Psoas muscle (tissue), 8 donors: ENCODE measurements at regions of chr19 and their contacts with region 1.

Region 1: GRCh38 chr19:44051654-44052402 is at the start of gene ZNF223:
- DNase-seq: peak; percentile 94 to 96
- ATAC-seq: peak; percentile 100
- H3K4me3 ChIP-seq: peak within 1 kb of the TSS; percentile 78
- H3K27ac ChIP-seq: peak within 1 kb of the TSS; percentile 72
- H3K4me1 ChIP-seq: peaks cover 10% of the 10 kb centered on the region
- H3K27me3 ChIP-seq: peaks cover 0 to 12% (median 5%) of the 10 kb centered on the region in 3 donors
- CTCF ChIP-seq: no peak
- total RNA-seq, gene ZNF223: 0.19 to 1.5 (median 0.64) TPM

Region 2: GRCh38 chr19:43983912-43984686 is 67.7 kb before region 1 on chr19 and contains the start of gene ZNF155:
- intact Hi-C with region 1: loop called in 1 of 2 experiments (anchors 5 kb)
- DNase-seq: peak; percentile 89 to 93
- ATAC-seq: peak; percentile 100
- H3K4me3 ChIP-seq: peak within 1 kb of the TSS; percentile 81
- H3K27ac ChIP-seq: peak within 1 kb of the TSS; percentile 62
- H3K4me1 ChIP-seq: peaks cover 4% of the 10 kb centered on the region
- H3K27me3 ChIP-seq: no peaks in the 10 kb centered on the region
- CTCF ChIP-seq: no peak
- total RNA-seq, gene ZNF155: 1.5 to 4.0 (median 2.5) TPM

Region 3: DNA sequence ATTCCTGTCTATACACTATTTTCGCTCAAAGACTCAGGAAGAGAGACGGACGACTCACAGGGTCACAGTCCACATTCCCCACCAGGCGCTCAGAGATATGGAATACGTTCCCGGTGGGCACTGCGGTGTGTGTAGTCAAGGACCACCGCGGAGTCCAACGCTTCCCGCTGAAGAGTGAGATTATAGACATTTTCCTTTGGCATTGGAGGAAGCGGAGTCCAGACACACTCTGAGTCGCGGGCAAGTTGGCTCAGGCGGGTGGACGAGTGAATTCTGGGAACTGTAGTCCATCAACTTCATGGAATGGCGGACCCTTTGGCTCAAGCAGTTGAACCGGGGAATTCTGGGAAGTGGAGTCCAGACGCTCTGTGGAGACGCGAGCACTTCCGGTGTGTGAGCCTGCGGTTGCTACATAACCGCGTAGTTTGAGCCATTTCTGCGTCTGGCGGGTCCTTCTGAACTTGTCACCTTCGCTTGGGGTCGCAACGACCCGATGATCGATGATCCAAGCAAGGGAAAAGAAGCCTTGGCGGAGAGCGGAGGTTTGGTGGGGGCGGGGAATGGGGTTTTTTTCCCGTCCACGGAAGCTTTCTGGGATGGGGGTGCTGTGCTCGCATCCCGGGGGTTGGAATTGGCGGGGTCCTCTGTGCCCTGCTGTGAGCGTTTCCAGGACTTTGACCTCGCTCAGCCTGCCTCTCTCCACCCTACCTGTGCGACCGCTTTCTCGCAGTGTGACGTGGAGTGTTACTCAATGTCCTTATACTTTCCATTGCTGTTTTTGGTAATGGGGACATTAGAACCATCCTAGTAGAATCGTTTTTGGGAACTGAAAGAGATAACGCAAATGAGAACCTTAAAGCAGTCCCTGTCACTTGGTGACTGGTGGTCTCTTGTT is 49.0 kb before region 1 on chr19 and contains the start of gene ZNF230:
- intact Hi-C with region 1: loop called in 1 of 2 experiments (anchors 5 kb)
- DNase-seq: peak; percentile 88 to 93
- ATAC-seq: peak; percentile 100
- H3K4me3 ChIP-seq: peak within 1 kb of the TSS; percentile 79
- H3K27ac ChIP-seq: peak within 1 kb of the TSS; percentile 79
- H3K4me1 ChIP-seq: peaks cover 12% of the 10 kb centered on the region
- H3K27me3 ChIP-seq: no peaks in the 10 kb centered on the region
- CTCF ChIP-seq: no peak
- total RNA-seq, gene ZNF230: 0.25 to 1.8 (median 1.2) TPM

Region 4: DNA sequence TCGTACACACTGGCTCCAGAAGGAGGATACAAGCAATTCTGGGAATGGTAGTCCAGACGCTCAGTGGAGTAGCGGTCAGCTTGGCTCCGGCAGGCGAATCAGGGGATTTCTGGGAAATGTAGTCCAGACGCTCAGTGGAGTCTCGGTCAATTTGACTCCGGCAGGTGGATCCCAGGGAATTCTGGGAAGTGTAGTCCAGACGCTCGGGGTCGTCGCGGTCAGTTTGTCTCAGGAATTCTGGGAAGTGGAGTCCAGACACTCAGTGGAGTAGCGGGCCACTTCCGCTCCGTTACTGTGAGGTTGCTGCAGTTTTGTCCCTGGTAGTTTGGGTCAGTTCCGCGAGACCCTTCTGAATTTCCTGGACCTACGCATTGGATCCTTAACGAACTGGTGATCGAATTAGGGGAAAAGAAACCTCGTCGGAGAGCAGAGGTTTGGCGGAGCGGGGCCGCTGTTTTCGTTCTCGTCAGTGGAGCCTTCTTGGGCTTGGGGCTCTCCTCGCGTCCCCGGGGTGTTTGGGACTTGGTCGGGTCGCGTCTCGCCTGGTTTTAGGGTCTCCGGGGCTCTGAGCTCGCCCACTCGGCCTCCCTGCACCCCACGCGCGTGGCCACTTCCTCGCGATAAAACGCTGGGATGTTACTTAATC is 61.4 kb after region 1 on chr19 and contains the start of gene ZNF225:
- intact Hi-C with region 1: loop called in 1 of 2 experiments (anchors 10 kb)
- DNase-seq: peak; percentile 93 to 95
- ATAC-seq: peak; percentile 99 to 100 (median 100)
- H3K4me3 ChIP-seq: peak within 1 kb of the TSS; percentile 93
- H3K27ac ChIP-seq: peak within 1 kb of the TSS; percentile 88
- H3K4me1 ChIP-seq: peaks cover 15% of the 10 kb centered on the region
- H3K27me3 ChIP-seq: no peaks in the 10 kb centered on the region
- CTCF ChIP-seq: peak; percentile 10
- total RNA-seq, gene ZNF225: 0.61 to 2.9 (median 1.4) TPM

Region 5: DNA sequence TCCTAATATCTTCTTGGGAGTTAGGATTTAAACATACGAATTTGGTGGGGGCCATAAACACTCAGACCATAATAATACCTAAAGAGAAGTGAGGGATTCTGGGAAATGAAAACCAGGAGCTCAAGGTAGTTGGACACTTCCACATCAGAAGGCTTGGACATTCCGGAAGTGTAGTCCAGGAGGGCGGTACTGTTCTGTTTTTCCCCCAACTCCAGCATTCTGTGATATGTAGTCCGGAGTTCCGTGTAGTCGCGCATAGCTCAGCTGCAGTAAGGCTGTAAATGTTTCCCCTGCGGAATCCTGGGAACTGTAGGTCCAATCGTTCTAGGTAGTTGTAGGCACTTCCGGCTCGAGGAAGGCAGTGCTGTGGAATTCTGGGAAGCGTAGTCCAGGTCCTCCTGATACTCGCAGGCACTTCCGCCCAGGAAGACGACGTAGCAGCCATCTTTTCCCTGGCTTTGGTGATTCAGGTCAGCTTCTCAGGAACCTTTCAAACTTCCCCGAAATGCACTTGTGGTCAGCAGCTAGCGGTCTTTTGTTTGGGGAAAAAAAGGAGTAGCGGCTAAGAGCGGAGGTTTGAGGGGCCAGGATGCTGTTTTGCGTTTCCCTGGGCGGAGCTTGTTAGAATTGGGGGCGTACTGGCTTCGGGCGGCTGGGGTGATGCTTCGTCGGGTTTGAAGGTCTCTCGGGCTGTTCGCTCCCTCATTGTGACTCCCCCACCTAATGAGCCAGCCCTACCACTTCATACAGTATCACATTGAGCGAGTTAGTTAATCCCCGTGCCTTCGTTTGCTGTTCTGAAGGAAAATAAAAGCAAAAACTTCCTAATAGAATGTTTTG is 113.1 kb after region 1 on chr19 and contains the start of gene ZNF226:
- intact Hi-C with region 1: loop called in 1 of 2 experiments (anchors 5 kb)
- DNase-seq: peak; percentile 83 to 90
- ATAC-seq: peak; percentile 100
- H3K4me3 ChIP-seq: peak within 1 kb of the TSS; percentile 92
- H3K27ac ChIP-seq: peak within 1 kb of the TSS; percentile 88
- H3K4me1 ChIP-seq: peaks cover 11% of the 10 kb centered on the region
- H3K27me3 ChIP-seq: no peaks in the 10 kb centered on the region
- CTCF ChIP-seq: no peak
- total RNA-seq, gene ZNF226: 4.4 to 8.6 (median 7.8) TPM

Region 6: GRCh38 chr19:44304659-44305193 is 252.9 kb after region 1 on chr19 and contains the start of gene ZNF235:
- intact Hi-C with region 1: loop called in 1 of 2 experiments (anchors 10 kb)
- DNase-seq: peak; percentile 92 to 96
- ATAC-seq: peak; percentile 100
- H3K4me3 ChIP-seq: peak within 1 kb of the TSS; percentile 92
- H3K27ac ChIP-seq: peak within 1 kb of the TSS; percentile 82
- H3K4me1 ChIP-seq: peaks cover 3% of the 10 kb centered on the region
- H3K27me3 ChIP-seq: no peaks in the 10 kb centered on the region
- CTCF ChIP-seq: no peak
- total RNA-seq, gene ZNF235: 1.4 to 2.6 (median 2.1) TPM

Region 7: DNA sequence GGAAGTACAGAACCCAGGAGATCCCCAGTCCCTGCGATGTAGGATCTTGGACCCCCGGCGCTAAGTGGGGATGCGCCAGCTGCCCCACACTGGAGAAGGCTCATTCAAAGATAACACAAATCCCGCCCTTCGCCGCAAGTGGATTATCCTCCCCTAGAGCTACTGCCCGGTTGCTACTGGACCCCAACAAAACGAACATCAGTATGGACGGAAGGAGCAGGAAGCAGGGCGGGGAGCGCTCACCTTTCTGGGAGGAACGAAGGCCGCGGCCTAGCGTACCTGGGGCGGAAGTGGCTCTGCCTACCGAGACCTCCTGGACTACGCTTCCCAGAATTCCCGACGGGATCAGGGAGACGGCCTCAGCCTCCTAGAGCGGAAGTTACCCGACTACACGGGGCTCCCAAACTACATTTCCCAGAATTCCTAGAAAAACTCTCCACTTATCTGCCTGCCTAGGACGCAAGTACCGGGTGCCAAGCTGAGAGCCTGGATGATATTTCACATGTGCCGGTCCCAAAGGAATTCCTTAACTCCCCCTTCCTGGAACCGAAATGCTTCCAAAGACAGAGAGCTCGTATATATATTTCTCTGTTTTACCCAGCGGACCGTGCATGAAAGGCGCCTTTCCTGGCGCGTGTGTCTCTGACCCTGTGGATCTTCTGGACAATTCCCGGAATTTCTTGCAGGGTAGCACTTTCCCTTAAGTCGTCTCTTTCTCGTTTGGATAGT is 304.7 kb after region 1 on chr19 and contains the start of gene ZNF112:
- intact Hi-C with region 1: loop called in 1 of 2 experiments (anchors 5 kb)
- DNase-seq: peak; percentile 80 to 91
- ATAC-seq: peak; percentile 98 to 100 (median 100)
- H3K4me3 ChIP-seq: peak within 1 kb of the TSS; percentile 79
- H3K27ac ChIP-seq: peak within 1 kb of the TSS; percentile 55
- H3K4me1 ChIP-seq: peaks cover 5% of the 10 kb centered on the region
- H3K27me3 ChIP-seq: no peaks in the 10 kb centered on the region
- CTCF ChIP-seq: no peak
- total RNA-seq, gene ZNF112: 1.4 to 4.8 (median 1.7) TPM